HCT116 (cell line): ENCODE measurements at regions of chr17 and their contacts with region 1.

Region 1: GRCh38 chr17:16380640-16381495 is at the start of gene UBB:
- DNase-seq: peak; percentile 95
- ATAC-seq: peak; percentile 95
- H3K4me3 ChIP-seq: peak within 1 kb of the TSS; percentile 86 to 96
- H3K27ac ChIP-seq: peak within 1 kb of the TSS; percentile 95
- H3K4me1 ChIP-seq: peaks cover 11 to 38% of the 10 kb centered on the region in 2 experiments; a peak in 3 of 4 replicates
- H3K27me3 ChIP-seq: no peaks in the 10 kb centered on the region
- CTCF ChIP-seq: no peak
- POLR2A ChIP-seq: peak; percentile 98
- RAD21 ChIP-seq: no peak; the same call in 1 of the 2 replicates
- total RNA-seq, gene UBB: 2,378 TPM

Region 2: DNA sequence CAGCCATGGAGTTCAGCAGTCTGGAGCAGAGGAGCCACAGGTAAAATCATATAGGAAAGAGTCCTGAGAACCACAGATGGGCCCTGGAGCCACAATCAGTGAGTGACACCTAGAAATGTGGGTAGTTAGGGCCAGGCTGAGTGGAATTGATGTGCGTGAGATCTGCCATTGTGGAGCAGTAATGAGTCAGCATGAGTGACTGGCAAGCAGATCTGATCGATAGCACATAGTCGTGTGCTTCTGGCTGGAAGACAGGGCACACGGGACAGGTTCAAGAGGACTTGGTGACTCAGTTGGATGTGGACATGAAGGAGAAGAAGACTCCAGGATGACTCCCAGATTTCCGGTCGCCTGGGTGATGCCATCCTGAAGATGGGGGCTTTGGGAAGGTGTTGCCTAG is 423.7 kb before region 1 on chr17:
- CTCF ChIA-PET with region 1: no interaction called
- POLR2A ChIA-PET with region 1: no interaction called
- RAD21 ChIA-PET with region 1: no interaction called
- intact Hi-C with region 1: loop called (anchors 5 kb)
- DNase-seq: peak; percentile 86
- ATAC-seq: peak; percentile 60
- H3K4me3 ChIP-seq: peak overlapping the region in 1 of 2 experiments; percentile 36; a peak in 2 of 4 replicates
- H3K27ac ChIP-seq: peak overlapping the region; percentile 92
- H3K4me1 ChIP-seq: peaks cover 82 to 97% of the 10 kb centered on the region in 2 experiments
- H3K27me3 ChIP-seq: no peaks in the 10 kb centered on the region
- CTCF ChIP-seq: no peak
- POLR2A ChIP-seq: no peak
- RAD21 ChIP-seq: no peak

Region 3: DNA sequence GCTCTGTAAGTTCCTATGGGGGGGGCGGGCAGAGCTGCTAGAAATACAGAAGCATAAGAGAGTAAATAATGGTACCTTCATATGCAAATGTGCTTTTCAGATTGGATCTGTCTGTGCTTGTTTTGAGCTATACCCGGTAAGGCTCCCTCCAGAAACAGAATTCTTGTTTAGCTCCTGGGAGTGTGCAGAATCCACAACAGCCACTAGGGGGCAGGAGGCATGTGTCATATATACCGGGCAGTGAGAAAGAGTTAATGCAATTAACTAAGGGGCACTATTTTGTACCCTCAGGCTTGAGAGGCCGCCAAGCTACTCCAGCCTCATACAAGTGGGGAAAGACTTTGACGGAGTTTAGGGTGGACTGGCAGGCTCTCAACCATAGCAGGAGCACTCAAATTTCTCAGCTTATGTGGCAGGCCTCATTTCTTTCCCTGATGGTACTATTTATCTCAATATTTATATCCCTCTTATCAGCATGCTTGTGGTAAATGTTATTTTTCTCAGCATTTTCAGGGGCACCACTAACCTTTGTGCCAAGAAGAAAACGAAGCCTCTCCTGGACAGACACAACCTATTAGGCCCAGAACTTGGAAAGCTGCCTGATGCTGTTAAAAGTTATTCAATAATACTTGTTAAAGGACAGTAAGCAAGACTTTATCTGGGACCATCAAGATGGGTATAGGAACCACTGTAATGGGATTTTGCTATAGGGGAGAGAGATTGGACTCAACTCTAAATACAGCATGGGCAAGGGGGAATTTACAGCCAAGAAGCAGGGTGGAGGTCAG is 16.9 kb before region 1 on chr17:
- CTCF ChIA-PET with region 1: interaction called, 15 read pairs
- POLR2A ChIA-PET with region 1: interaction called, 11 read pairs
- RAD21 ChIA-PET with region 1: no interaction called
- intact Hi-C with region 1: no loop called
- DNase-seq: peak; percentile 72
- ATAC-seq: peak; percentile 97
- H3K4me3 ChIP-seq: no peak overlapping the region
- H3K27ac ChIP-seq: no peak overlapping the region
- H3K4me1 ChIP-seq: peaks cover 4 to 8% of the 10 kb centered on the region in 2 experiments; a peak in 2 of 4 replicates
- H3K27me3 ChIP-seq: no peaks in the 10 kb centered on the region
- CTCF ChIP-seq: peak; percentile 92 to 97 (median 96)
- POLR2A ChIP-seq: no peak
- RAD21 ChIP-seq: peak; percentile 85

Region 4: DNA sequence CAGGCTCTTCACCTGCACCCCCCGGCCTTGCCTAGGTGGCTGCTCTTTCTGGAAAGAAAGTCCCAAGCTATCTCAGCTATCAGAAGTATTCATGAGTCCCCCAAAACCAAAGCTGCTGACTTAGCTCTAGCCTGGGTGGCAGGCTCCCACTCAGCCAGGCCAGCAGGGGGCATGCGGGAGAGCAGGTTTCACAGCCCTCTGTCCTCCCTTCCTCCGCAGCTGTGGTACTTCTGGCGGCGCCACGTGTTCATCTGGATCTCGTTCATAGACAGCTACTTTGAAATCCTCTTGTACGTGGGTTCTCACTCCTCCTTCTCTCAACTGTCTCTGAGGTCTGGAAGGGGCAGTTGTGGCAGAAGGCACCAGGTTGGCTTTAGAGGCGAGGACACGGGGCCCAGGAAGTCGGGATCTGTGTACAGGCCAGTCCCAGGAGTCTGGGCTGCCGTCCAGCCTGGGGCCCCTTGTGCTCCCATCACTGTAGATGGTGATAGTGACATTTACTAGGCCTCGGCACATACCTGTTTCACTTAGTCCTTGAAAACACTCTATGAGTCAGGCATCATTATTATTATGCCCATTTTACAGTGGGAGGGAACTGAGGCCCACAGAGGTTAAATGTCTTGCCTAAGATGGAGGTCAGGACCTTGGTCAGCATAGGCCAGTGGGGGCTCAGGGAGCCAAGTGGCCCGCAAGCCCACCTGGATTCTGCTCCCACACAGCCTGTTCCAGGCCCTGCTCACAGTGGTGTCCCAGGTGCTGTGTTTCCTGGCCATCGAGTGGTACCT is 47.4 kb after region 1 on chr17:
- CTCF ChIA-PET with region 1: interaction called, 7 read pairs
- POLR2A ChIA-PET with region 1: interaction called, 10 read pairs
- RAD21 ChIA-PET with region 1: no interaction called
- intact Hi-C with region 1: loop called (anchors 5 kb)
- DNase-seq: no peak
- ATAC-seq: peak; percentile 97
- H3K4me3 ChIP-seq: no peak overlapping the region
- H3K27ac ChIP-seq: no peak overlapping the region
- H3K4me1 ChIP-seq: peaks cover 2 to 10% of the 10 kb centered on the region in 2 experiments; a peak in 3 of 4 replicates
- H3K27me3 ChIP-seq: no peaks in the 10 kb centered on the region
- CTCF ChIP-seq: peak; percentile 74 to 93 (median 80)
- POLR2A ChIP-seq: peak; percentile 22
- RAD21 ChIP-seq: no peak; the same call in none of the 2 replicates

Region 5: GRCh38 chr17:16521070-16521727 is 140.3 kb after region 1 on chr17:
- CTCF ChIA-PET with region 1: interaction called, 5 read pairs
- POLR2A ChIA-PET with region 1: interaction called, 4 read pairs
- RAD21 ChIA-PET with region 1: no interaction called
- intact Hi-C with region 1: loop called (anchors 2 kb)
- DNase-seq: peak; percentile 77
- ATAC-seq: peak; percentile 91
- H3K4me3 ChIP-seq: no peak overlapping the region
- H3K27ac ChIP-seq: no peak overlapping the region; the same call in 1 of the 2 replicates
- H3K4me1 ChIP-seq: peaks cover 16 to 19% of the 10 kb centered on the region in 2 experiments
- H3K27me3 ChIP-seq: no peaks in the 10 kb centered on the region
- CTCF ChIP-seq: peak; percentile 85 to 94 (median 94)
- POLR2A ChIP-seq: no peak
- RAD21 ChIP-seq: peak; percentile 97